ENCODE measurements at regions of chr4 and their contacts with region 1.

Region 1: GRCh38 chr4:185404031-185404430 is 7.4 kb downstream of the ANKRD37 start:
- DNase-seq: no peak
- H3K4me3 ChIP-seq: no peak overlapping the region
- H3K27ac ChIP-seq: no peak overlapping the region
- H3K4me1 ChIP-seq: no peaks in the 10 kb centered on the region
- H3K27me3 ChIP-seq: no peaks in the 10 kb centered on the region
- CTCF ChIP-seq: no peak

Region 2: GRCh38 chr4:185196437-185196836 is 207.6 kb before region 1 on chr4:
- CTCF ChIA-PET with region 1: no interaction called
- POLR2A ChIA-PET with region 1: interaction called, 11 read pairs
- intact Hi-C with region 1: no loop called
- DNase-seq: peak; percentile 26 to 88
- H3K4me3 ChIP-seq: no peak overlapping the region
- H3K27ac ChIP-seq: peak overlapping the region; percentile 53
- H3K4me1 ChIP-seq: peaks cover 29% of the 10 kb centered on the region
- H3K27me3 ChIP-seq: no peaks in the 10 kb centered on the region
- CTCF ChIP-seq: no peak

Region 3: GRCh38 chr4:185513489-185514181 is 109.6 kb after region 1 on chr4:
- CTCF ChIA-PET with region 1: no interaction called
- POLR2A ChIA-PET with region 1: no interaction called
- intact Hi-C with region 1: no loop called
- DNase-seq: no peak
- H3K4me3 ChIP-seq: no peak overlapping the region
- H3K27ac ChIP-seq: no peak overlapping the region
- H3K4me1 ChIP-seq: peaks cover 2% of the 10 kb centered on the region
- H3K27me3 ChIP-seq: no peaks in the 10 kb centered on the region
- CTCF ChIP-seq: no peak